Activated CD4-positive, alpha-beta memory T cell treated with anti-CD3 and anti-CD28 coated beads for 36 hours (primary cell): ENCODE measurements at regions of chr4 and their contacts with region 1.

Region 1: DNA sequence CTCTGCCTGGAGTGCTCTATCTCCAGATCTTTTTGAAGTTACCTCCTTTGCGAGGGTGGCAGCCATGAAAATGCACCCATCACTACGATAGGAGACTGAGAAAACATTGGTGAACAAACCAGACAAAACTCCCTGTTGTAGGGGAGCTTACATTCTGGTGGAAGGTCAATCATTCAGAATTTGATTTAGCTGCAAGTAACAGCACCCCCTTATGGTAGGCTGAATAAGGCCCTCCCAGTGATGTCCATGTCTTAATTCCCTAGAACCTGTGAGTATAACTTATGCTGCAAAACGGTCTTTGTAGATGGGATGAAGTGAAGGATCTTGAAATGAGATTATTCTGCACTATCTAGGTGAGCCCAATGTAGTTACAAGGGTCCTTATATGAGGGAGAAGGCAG is 5.6 kb upstream of the TEC start:
- DNase-seq: no peak
- H3K4me3 Mint-ChIP-seq: no peak overlapping the region
- H3K27ac Mint-ChIP-seq: no peak overlapping the region
- H3K4me1 Mint-ChIP-seq: peaks cover 11% of the 10 kb centered on the region
- H3K27me3 Mint-ChIP-seq: peaks cover 8% of the 10 kb centered on the region

Region 2: GRCh38 chr4:48203819-48204218 is 71.4 kb before region 1 on chr4:
- CTCF ChIA-PET with region 1: no interaction called
- POLR2A ChIA-PET with region 1: no interaction called
- intact Hi-C with region 1: no loop called
- DNase-seq: no peak
- H3K4me3 Mint-ChIP-seq: no peak overlapping the region
- H3K27ac Mint-ChIP-seq: no peak overlapping the region
- H3K4me1 Mint-ChIP-seq: no peaks in the 10 kb centered on the region
- H3K27me3 Mint-ChIP-seq: peaks cover 4% of the 10 kb centered on the region

Region 3: DNA sequence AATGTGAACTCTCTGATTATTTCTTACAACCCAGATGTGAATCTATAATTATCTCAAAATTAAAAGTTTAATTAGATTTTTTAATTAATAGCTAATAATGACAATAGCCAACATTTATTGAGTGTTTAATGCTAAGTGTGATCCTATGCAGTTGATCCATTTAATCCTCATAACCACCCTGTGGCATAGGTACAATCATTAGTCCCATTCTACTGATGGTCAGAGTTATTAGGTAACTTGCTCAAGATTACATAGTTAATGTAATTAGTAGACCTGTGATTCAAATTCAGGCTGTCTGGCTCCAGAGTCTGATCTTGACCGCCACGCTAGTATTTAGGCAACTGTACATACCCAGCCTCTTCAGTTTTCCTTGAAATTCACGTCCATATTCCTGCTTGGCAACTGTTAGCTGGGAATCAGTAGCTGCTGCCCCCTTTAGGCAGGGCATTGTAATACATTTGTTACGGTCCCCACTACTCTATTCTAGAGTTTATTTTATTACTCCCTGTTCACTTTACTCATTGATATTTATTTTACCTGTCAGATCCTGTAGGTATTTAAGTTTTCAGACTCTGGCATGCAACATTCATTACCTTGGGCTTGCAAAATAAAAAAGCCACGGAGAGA is 15.0 kb after region 1 on chr4:
- CTCF ChIA-PET with region 1: interaction called, 10 read pairs
- POLR2A ChIA-PET with region 1: no interaction called
- intact Hi-C with region 1: no loop called
- DNase-seq: peak; percentile 23
- H3K4me3 Mint-ChIP-seq: no peak overlapping the region
- H3K27ac Mint-ChIP-seq: no peak overlapping the region
- H3K4me1 Mint-ChIP-seq: no peaks in the 10 kb centered on the region
- H3K27me3 Mint-ChIP-seq: no peaks in the 10 kb centered on the region

Region 4: DNA sequence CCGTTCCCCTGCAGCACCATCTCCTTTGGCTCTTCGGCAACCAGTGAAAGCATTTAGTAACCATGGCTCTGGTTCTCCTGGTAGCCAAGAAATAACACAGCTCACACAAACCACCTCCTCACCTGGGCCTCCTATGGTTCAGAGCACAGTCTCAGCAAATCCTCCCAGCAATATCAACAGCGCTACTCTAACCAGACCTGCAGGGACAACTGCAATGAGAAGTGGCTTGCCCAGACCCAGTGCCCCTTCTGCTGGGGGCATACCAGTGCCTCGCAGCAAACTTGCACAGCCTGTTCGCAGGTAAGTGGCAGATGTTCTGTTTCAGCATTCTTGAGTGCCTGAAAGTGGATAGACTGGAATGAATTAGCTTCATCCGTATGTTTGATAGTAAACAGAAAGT is 144.9 kb after region 1 on chr4:
- CTCF ChIA-PET with region 1: no interaction called
- POLR2A ChIA-PET with region 1: no interaction called
- intact Hi-C with region 1: no loop called
- DNase-seq: no peak
- H3K4me3 Mint-ChIP-seq: no peak overlapping the region
- H3K27ac Mint-ChIP-seq: no peak overlapping the region
- H3K4me1 Mint-ChIP-seq: no peaks in the 10 kb centered on the region
- H3K27me3 Mint-ChIP-seq: no peaks in the 10 kb centered on the region